ENCODE measurements at regions of chr12 and their contacts with region 1.

Region 1: DNA sequence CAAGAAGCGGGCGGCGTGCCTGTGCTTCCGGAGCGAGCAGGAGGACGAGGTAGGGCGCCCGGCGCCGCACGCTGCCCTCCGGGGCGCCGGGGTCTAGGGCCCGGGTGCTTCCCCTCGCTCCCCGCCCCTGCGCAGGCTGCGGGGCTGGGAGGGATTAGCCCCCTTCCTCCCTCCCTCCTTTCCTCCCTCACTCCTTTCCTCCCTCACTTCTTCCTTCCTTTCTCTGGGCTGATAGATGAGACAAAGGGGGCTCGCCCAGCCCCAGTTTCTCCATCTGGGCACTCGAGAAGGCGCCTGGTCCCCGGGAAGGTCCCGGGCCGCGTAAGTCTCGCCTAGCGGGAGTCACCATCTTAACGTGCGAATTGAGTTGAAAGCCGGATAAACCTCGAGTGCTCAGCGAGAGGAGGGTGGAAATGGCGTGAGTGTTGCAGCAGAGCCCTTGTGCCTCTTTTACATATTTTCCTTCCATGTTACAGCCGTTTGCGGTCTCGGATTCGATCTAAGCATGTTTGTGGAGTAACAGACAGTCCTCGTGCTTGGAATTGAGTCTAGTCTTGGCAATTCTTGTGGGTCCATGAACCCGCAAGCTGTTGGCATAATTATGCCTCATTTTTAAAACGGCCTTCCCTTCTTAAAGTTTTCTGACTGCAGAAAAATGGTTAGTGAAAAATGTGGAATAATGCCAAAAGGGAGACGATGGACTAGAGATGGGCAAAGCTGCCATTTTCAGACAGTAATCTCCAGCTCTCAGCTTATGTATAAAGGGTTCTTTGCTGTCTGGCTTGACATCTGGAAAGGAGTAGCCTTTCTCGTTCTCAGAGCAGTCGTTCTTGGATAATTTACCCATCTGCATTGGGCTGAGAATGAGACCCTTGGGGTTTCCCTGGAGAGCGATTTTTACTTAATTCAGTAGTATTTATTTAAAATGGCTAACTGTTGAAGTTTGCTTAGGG is 924 bp downstream of the NUDT4 start:
- DNase-seq: peak in 1 of 2 donors; percentile 74
- H3K4me3 ChIP-seq: peak overlapping the region; percentile 56 to 93
- H3K27ac ChIP-seq: peak overlapping the region; percentile 96 to 99
- H3K4me1 ChIP-seq: peaks cover 5 to 33% of the 10 kb centered on the region in 2 donors
- H3K27me3 ChIP-seq: no peaks in the 10 kb centered on the region
- CTCF ChIP-seq: no peak

Region 2: GRCh38 chr12:92928962-92929915 is 449.4 kb before region 1 on chr12 and contains the start of gene EEA1:
- intact Hi-C with region 1: loop called (anchors 5 kb)
- DNase-seq: peak; percentile 82 to 97
- H3K4me3 ChIP-seq: peak within 1 kb of the TSS; percentile 69 to 100
- H3K27ac ChIP-seq: peak within 1 kb of the TSS; percentile 98 to 99
- H3K4me1 ChIP-seq: peaks cover 5 to 13% of the 10 kb centered on the region in 2 donors
- H3K27me3 ChIP-seq: no peaks in the 10 kb centered on the region
- CTCF ChIP-seq: peak; percentile 11 to 36 (median 30)
- total RNA-seq, gene EEA1: 10.9 TPM

Region 3: DNA sequence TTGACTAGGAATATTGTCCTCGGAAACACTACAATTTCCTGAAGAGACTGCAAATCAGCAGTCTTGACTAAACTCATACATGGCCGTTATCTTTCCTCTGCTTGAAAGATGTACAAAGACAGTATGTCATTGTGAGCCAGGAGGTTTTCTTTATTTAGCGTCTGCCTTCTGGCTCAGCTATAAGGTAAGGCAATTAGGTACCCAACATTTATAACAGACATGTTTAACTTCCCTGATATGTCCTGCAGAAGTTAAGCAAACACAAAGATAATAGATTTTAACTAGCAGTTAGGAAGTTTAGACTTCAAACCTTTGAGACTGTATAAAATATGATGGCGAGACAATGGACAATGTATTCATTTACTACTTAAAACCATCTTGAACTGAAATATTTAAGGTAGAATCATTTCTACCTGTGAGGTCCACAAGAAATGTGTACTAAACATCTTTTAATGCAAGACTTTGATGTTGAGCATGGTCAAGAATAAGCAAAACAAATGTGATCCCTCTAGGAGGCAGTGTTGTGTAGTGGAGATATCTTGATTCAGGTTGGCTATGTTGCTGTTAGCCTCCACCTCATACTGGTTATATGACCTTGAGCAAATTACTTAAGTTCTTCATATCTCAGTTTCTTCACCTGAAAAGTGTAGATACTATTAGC is 353.4 kb before region 1 on chr12:
- intact Hi-C with region 1: loop called (anchors 5 kb)
- DNase-seq: no peak
- H3K4me3 ChIP-seq: no peak overlapping the region
- H3K27ac ChIP-seq: no peak overlapping the region
- H3K4me1 ChIP-seq: no peaks in the 10 kb centered on the region
- H3K27me3 ChIP-seq: no peaks in the 10 kb centered on the region
- CTCF ChIP-seq: peak; percentile 20 to 48 (median 42)

Region 4: GRCh38 chr12:93191956-93192355 is 186.7 kb before region 1 on chr12:
- intact Hi-C with region 1: loop called (anchors 5 kb)
- DNase-seq: peak; percentile 19 to 86
- H3K4me3 ChIP-seq: peak overlapping the region; percentile 28 to 29
- H3K27ac ChIP-seq: peak overlapping the region; percentile 71 to 83
- H3K4me1 ChIP-seq: peaks cover 0 to 17% of the 10 kb centered on the region in 2 donors
- H3K27me3 ChIP-seq: no peaks in the 10 kb centered on the region
- CTCF ChIP-seq: no peak

Region 5: DNA sequence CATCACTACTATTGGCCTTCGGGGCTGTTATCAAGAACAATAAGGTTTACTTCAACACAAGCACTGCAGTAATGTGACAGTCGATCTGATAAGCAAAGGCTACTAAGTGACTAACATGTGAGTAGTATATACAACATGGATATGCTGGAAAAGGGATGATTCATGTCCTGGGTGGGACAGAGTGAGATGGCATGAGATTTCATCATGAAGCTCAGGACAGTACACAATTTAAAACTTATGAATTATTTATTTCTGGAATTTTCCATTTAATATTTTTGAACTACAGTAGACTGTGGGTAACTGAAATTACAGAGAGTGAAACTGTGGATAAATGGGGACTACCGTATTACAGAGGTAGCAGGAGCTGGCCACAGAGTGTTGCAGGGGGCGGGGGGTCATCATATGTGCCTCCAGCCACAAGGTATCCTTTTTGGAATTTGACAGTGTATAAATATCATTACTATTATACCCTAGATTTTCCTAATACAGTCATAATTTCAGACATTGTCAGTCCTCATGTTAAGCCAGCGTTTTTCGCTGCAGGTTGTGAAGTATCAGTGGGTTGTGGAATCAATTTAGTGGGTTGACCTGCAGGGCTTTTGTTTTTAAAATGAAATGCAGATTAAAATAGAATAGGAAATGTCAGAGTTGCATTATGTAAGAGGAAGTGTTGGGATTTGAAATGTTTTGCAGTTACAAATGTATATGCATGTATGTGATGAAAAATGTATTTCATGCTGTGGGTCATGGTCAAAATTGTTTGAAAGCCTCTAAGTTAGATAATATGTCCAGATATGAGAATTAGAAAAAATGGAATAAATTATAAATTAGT is 148.9 kb before region 1 on chr12:
- intact Hi-C with region 1: no loop called
- DNase-seq: no peak
- H3K4me3 ChIP-seq: no peak overlapping the region
- H3K27ac ChIP-seq: no peak overlapping the region
- H3K4me1 ChIP-seq: peaks cover 0 to 6% of the 10 kb centered on the region in 2 donors
- H3K27me3 ChIP-seq: no peaks in the 10 kb centered on the region
- CTCF ChIP-seq: no peak

Region 6: DNA sequence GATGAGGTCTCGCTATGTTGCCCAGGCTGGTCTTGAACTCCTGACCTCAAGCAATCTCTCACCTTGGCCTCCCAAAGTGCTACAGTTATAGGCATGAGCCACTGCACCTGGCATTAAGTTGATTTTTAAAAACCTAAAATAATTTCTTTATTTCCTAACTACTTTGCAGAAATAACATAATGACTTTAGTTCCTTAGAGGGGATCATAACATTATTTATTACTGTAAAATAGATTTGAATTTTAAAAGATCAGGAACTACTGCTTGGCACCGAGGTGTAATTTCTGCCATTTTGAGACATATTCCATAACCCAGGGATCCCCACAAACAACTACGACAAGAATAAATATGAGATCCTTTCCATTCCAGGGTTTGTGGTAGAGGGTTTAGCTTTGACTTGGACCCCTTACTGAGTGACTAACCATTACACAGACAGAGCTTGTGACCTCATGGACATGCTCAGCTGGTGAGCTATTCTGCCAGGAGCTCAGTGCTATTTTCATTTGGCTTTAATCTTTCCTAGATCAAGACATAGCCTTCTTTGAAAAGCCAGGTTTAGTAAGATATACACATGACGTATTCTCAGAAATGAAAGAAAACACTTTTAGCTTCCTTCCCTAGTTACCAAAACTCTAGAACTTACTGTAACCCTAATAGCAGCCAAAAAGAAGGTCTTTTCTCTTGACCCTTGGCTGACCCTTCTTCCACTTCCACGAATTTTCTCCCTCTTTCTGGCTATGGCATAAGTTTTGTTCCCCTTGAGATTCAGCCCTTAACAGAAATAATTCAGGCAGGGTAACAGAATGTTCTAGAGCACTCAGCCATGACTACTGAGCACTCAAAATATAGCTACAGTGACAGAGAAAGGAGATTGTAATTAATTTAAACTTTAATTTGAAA is 76.1 kb before region 1 on chr12:
- intact Hi-C with region 1: loop called (anchors 1 kb)
- DNase-seq: peak in 1 of 2 donors; percentile 87
- H3K4me3 ChIP-seq: no peak overlapping the region
- H3K27ac ChIP-seq: peak overlapping the region; percentile 72 to 75
- H3K4me1 ChIP-seq: peaks cover 5 to 22% of the 10 kb centered on the region in 2 donors
- H3K27me3 ChIP-seq: no peaks in the 10 kb centered on the region
- CTCF ChIP-seq: no peak

Region 7: GRCh38 chr12:93322784-93323183 is 55.9 kb before region 1 on chr12:
- intact Hi-C with region 1: no loop called
- DNase-seq: no peak
- H3K4me3 ChIP-seq: no peak overlapping the region
- H3K27ac ChIP-seq: no peak overlapping the region
- H3K4me1 ChIP-seq: no peaks in the 10 kb centered on the region
- H3K27me3 ChIP-seq: no peaks in the 10 kb centered on the region
- CTCF ChIP-seq: no peak

Region 8: DNA sequence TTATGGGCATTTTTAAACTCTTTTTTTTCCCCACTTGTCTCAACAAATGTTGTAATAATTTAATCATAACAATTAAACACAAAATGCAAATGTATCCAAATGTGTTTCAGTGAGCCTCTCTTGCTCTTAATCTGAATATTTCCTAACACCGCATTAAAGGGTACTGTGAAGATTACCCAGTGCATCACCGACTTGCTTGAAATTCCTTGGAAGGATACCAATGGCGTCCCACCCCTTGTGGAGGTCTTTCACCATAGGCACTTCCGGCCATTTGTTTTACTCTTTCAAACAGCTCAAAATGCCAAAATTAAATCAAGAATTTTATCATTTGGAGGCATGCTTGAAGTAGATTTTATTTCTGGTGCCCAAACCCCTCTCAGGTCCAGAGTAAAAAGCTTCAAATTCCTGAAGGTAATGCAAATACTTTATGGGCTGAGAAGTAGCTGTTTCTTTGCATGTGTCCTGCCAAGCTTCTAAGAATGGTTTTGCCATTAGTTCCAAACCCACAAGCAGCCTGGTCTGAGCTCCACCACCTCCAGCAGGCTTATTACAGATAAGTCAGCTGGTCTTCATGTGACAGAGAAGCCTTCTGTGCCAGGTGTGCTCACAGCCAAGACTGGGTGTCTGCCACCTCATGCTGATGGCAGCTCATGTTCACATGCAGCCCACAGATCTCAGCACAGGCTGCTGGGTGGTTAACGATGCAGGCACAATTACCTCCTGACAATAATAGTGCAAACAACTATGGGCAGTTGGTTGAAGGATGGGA is 17.3 kb before region 1 on chr12:
- intact Hi-C with region 1: loop called (anchors 2 kb)
- DNase-seq: peak; percentile 44 to 74
- H3K4me3 ChIP-seq: no peak overlapping the region
- H3K27ac ChIP-seq: peak overlapping the region; percentile 50 to 67
- H3K4me1 ChIP-seq: peaks cover 2 to 40% of the 10 kb centered on the region in 2 donors
- H3K27me3 ChIP-seq: no peaks in the 10 kb centered on the region
- CTCF ChIP-seq: no peak